MCF 10A (cell line): ENCODE measurements at regions of chr17 and their contacts with region 1.

Region 1: GRCh38 chr17:19248144-19248927 is 11.2 kb downstream of the EPN2 start:
- DNase-seq: no peak
- H3K4me3 Mint-ChIP-seq: no peak overlapping the region
- H3K27ac Mint-ChIP-seq: no peak overlapping the region
- H3K4me1 Mint-ChIP-seq: peaks cover 32% of the 10 kb centered on the region
- H3K27me3 Mint-ChIP-seq: no peaks in the 10 kb centered on the region
- CTCF ChIP-seq: no peak

Region 2: DNA sequence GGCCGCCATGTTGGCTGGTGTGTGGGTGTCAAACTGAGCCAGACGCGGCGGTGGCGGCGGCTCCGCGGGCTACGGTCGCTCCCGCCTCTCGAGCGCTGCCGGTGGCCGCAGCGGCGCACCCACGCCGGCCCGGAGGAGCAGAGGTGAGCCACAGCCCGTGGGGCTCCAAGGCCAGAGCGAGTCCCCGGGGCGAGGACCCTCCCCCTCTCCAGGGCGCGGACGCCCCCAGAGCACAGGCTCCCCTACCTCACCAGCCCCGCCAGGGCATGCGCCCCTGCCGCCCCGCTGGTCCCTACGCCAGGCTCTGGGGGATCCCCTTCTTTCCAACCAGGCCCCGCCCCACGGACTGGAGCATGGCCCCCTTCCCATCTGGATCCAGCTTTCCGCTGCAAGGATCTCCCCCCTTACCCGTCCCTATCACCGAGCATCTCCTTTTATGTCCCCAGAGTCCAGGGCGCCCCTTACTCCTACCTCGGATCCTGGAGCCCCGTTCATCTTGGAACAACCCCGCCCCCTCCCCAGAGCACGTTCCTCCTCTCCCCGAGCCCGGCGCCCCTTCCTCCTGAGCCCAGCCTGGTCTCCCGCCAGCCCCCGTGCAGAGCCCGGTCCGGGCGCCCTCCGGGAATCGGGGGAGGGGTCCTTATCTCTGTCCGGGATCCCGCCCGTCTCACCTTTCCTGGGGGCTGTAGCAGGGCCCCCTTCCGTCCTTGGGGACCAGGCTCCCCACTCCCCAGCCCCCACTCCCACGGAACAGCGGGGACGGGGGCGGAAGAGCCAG is 10.8 kb before region 1 on chr17:
- CTCF ChIA-PET with region 1: interaction called, 5 read pairs
- POLR2A ChIA-PET with region 1: interaction called, 13 read pairs
- intact Hi-C with region 1: no loop called
- DNase-seq: no peak
- H3K4me3 Mint-ChIP-seq: peak overlapping the region; percentile 90
- H3K27ac Mint-ChIP-seq: peak overlapping the region; percentile 73
- H3K4me1 Mint-ChIP-seq: peaks cover 22% of the 10 kb centered on the region
- H3K27me3 Mint-ChIP-seq: no peaks in the 10 kb centered on the region
- CTCF ChIP-seq: no peak

Region 3: DNA sequence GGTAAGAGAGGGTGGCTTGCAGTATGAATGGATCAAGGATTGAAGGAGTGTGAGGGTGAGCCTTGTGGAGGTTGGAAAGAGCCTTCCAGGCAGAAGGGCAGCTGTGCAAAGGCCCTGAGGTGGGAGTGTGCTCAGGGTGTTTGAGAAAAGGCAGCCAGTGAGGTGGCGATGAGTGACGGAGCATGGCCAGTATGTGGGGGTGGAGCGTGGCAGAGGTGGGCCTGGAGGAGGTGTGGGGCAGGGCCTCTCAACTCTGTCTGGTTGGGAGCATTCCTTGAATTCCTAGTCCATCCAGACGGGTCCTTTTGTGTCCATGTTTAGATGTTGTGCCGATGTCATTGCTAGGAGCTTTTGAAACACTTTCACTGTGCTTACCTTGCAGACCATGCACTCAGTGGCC is 40.1 kb after region 1 on chr17:
- CTCF ChIA-PET with region 1: no interaction called
- POLR2A ChIA-PET with region 1: no interaction called
- intact Hi-C with region 1: no loop called
- DNase-seq: no peak
- H3K4me3 Mint-ChIP-seq: no peak overlapping the region
- H3K27ac Mint-ChIP-seq: no peak overlapping the region
- H3K4me1 Mint-ChIP-seq: no peaks in the 10 kb centered on the region
- H3K27me3 Mint-ChIP-seq: no peaks in the 10 kb centered on the region
- CTCF ChIP-seq: no peak

Region 4: GRCh38 chr17:19317359-19318095 is 69.2 kb after region 1 on chr17:
- CTCF ChIA-PET with region 1: no interaction called
- POLR2A ChIA-PET with region 1: no interaction called
- intact Hi-C with region 1: no loop called
- DNase-seq: no peak
- H3K4me3 Mint-ChIP-seq: no peak overlapping the region
- H3K27ac Mint-ChIP-seq: no peak overlapping the region
- H3K4me1 Mint-ChIP-seq: peaks cover 10% of the 10 kb centered on the region
- H3K27me3 Mint-ChIP-seq: no peaks in the 10 kb centered on the region
- CTCF ChIP-seq: no peak